Caco-2 (cell line): ENCODE measurements at regions of chr12 and their contacts with region 1.

Region 1: DNA sequence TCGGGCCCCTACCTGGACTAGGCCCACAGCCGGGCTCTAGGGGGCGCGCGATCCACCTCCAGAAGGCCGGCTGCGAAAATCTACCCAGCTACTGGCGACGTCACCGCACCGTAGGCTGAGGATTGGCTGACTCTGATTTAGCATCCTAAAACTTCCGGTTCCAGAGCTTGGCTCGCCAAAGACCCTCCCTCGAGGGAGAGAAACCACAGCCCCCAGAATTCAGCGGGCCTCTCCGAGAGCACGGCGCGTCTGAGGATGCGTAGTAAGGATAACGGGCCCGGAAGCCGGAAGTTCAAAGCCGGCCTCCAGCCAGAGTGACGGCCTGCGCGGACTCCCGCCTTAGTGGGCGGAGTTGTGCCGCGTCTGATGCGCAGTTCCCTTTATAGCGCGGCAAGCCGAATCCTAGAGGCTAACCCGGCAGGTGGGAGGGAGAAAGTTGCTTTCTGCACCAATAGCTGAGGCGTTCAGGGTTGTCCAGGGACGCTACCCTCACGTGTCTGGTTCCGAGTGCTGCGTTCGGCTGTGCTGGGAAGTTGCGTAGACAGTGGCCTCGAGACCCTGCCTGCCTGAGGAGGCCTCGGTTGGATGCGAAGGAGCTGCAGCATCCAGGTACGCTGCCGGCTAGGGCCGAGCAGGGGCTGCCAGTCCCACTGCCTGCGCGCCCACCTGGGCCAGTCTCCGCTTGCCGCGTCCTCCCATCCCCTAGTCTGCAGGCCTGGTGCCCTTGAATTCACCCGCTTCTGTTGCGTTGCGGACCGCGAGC is at the start of gene COX14:
- DNase-seq: peak; percentile 100
- H3K4me3 ChIP-seq: peak within 1 kb of the TSS; percentile 80
- H3K4me3 Mint-ChIP-seq: peak within 1 kb of the TSS; percentile 100
- H3K27ac Mint-ChIP-seq: peak within 1 kb of the TSS; percentile 97
- H3K4me1 ChIP-seq: peaks cover 24% of the 10 kb centered on the region
- H3K4me1 Mint-ChIP-seq: peaks cover 17% of the 10 kb centered on the region
- H3K27me3 ChIP-seq: no peaks in the 10 kb centered on the region
- H3K27me3 Mint-ChIP-seq: no peaks in the 10 kb centered on the region
- CTCF ChIP-seq: peak; percentile 94 to 97
- total RNA-seq, gene COX14: 85.0 and 86.3 TPM in 2 replicates

Region 2: GRCh38 chr12:49888461-49889151 is 223.3 kb before region 1 on chr12:
- CTCF ChIA-PET with region 1: no interaction called
- POLR2A ChIA-PET with region 1: no interaction called
- intact Hi-C with region 1: no loop called
- DNase-seq: no peak
- H3K4me3 ChIP-seq: no peak overlapping the region
- H3K4me3 Mint-ChIP-seq: no peak overlapping the region
- H3K27ac Mint-ChIP-seq: no peak overlapping the region
- H3K4me1 ChIP-seq: peaks cover 15% of the 10 kb centered on the region
- H3K4me1 Mint-ChIP-seq: no peaks in the 10 kb centered on the region
- H3K27me3 ChIP-seq: no peaks in the 10 kb centered on the region
- H3K27me3 Mint-ChIP-seq: no peaks in the 10 kb centered on the region
- CTCF ChIP-seq: no peak

Region 3: DNA sequence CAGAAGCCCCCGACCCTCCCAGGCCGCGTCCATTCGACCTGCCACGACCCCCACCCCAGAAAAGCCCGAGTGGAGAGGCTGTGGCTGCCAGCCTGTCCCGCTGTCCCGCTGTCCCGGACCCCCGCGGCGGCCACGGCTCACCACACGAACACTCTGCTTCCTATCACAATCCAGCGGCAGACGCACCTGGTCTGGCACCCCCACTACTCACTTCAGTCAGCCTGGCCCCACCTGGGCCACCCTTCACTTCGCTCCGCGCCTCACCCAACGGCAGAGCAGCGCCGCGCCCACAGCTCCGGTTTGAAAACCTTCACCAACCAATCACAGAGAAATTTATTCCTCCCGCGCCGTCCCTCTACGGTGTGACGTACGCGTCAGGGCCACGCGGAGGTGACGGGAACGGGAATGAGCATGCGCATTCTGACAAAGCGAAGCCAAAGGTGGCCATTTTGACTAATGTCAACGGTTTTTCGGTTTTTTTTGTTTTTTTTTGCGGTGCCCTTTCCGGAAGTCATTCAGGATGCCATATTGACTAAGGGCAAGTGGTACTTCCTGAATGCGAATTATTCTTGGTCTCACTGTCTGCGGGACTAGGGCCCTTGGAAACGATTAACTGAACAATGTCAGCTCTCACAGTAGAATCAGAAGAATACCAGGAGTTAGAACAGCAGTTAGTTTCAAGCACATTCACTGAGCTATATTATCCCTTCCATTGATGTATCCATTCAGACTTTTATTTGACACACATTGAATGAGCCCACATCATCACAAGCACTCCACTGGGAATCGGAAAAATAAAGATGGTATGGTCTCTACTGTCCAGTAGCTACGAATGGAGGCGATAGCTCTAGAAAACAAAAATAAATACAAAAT is 86.5 kb before region 1 on chr12 and contains the start of gene RACGAP1:
- CTCF ChIA-PET with region 1: no interaction called
- POLR2A ChIA-PET with region 1: interaction called, 4 read pairs
- intact Hi-C with region 1: loop called (anchors 1 kb)
- DNase-seq: peak; percentile 99
- H3K4me3 ChIP-seq: peak within 1 kb of the TSS; percentile 70
- H3K4me3 Mint-ChIP-seq: peak within 1 kb of the TSS; percentile 86
- H3K27ac Mint-ChIP-seq: peak within 1 kb of the TSS; percentile 92
- H3K4me1 ChIP-seq: peaks cover 4% of the 10 kb centered on the region
- H3K4me1 Mint-ChIP-seq: peaks cover 21% of the 10 kb centered on the region
- H3K27me3 ChIP-seq: no peaks in the 10 kb centered on the region
- H3K27me3 Mint-ChIP-seq: no peaks in the 10 kb centered on the region
- CTCF ChIP-seq: no peak
- total RNA-seq, gene RACGAP1: 122 and 131 TPM in 2 replicates

Region 4: GRCh38 chr12:50127546-50127945 is 15.7 kb after region 1 on chr12:
- CTCF ChIA-PET with region 1: interaction called, 24 read pairs
- POLR2A ChIA-PET with region 1: interaction called, 12 read pairs
- intact Hi-C with region 1: no loop called
- DNase-seq: no peak
- H3K4me3 ChIP-seq: no peak overlapping the region
- H3K4me3 Mint-ChIP-seq: no peak overlapping the region
- H3K27ac Mint-ChIP-seq: no peak overlapping the region
- H3K4me1 ChIP-seq: no peaks in the 10 kb centered on the region
- H3K4me1 Mint-ChIP-seq: no peaks in the 10 kb centered on the region
- H3K27me3 ChIP-seq: no peaks in the 10 kb centered on the region
- H3K27me3 Mint-ChIP-seq: no peaks in the 10 kb centered on the region
- CTCF ChIP-seq: no peak

Region 5: GRCh38 chr12:50142993-50143392 is 31.1 kb after region 1 on chr12:
- CTCF ChIA-PET with region 1: interaction called, 21 read pairs
- POLR2A ChIA-PET with region 1: interaction called, 5 read pairs
- intact Hi-C with region 1: no loop called
- DNase-seq: peak; percentile 74 to 81
- H3K4me3 ChIP-seq: no peak overlapping the region
- H3K4me3 Mint-ChIP-seq: peak overlapping the region; percentile 53
- H3K27ac Mint-ChIP-seq: peak overlapping the region; percentile 33
- H3K4me1 ChIP-seq: peaks cover 29% of the 10 kb centered on the region
- H3K4me1 Mint-ChIP-seq: peaks cover 23% of the 10 kb centered on the region
- H3K27me3 ChIP-seq: no peaks in the 10 kb centered on the region
- H3K27me3 Mint-ChIP-seq: no peaks in the 10 kb centered on the region
- CTCF ChIP-seq: no peak

Region 6: GRCh38 chr12:50195832-50196231 is 84.0 kb after region 1 on chr12:
- CTCF ChIA-PET with region 1: no interaction called
- POLR2A ChIA-PET with region 1: interaction called, 12 read pairs
- intact Hi-C with region 1: no loop called
- DNase-seq: no peak
- H3K4me3 ChIP-seq: no peak overlapping the region
- H3K4me3 Mint-ChIP-seq: no peak overlapping the region
- H3K27ac Mint-ChIP-seq: no peak overlapping the region
- H3K4me1 ChIP-seq: peaks cover 7% of the 10 kb centered on the region
- H3K4me1 Mint-ChIP-seq: peaks cover 12% of the 10 kb centered on the region
- H3K27me3 ChIP-seq: no peaks in the 10 kb centered on the region
- H3K27me3 Mint-ChIP-seq: no peaks in the 10 kb centered on the region
- CTCF ChIP-seq: no peak

Region 7: GRCh38 chr12:50400598-50401364 is 288.9 kb after region 1 on chr12 and contains the start of gene LARP4:
- CTCF ChIA-PET with region 1: no interaction called
- POLR2A ChIA-PET with region 1: interaction called, 4 read pairs
- intact Hi-C with region 1: loop called (anchors 1 kb)
- DNase-seq: peak; percentile 98
- H3K4me3 ChIP-seq: peak within 1 kb of the TSS; percentile 83
- H3K4me3 Mint-ChIP-seq: peak within 1 kb of the TSS; percentile 99
- H3K27ac Mint-ChIP-seq: peak within 1 kb of the TSS; percentile 100
- H3K4me1 ChIP-seq: peaks cover 36% of the 10 kb centered on the region
- H3K4me1 Mint-ChIP-seq: peaks cover 34% of the 10 kb centered on the region
- H3K27me3 ChIP-seq: no peaks in the 10 kb centered on the region
- H3K27me3 Mint-ChIP-seq: no peaks in the 10 kb centered on the region
- CTCF ChIP-seq: no peak
- total RNA-seq, gene LARP4: 103 and 115 TPM in 2 replicates